Naive thymus-derived CD4-positive, alpha-beta T cell (primary cell): ENCODE measurements at regions of chr4 and their contacts with region 1.

Region 1: DNA sequence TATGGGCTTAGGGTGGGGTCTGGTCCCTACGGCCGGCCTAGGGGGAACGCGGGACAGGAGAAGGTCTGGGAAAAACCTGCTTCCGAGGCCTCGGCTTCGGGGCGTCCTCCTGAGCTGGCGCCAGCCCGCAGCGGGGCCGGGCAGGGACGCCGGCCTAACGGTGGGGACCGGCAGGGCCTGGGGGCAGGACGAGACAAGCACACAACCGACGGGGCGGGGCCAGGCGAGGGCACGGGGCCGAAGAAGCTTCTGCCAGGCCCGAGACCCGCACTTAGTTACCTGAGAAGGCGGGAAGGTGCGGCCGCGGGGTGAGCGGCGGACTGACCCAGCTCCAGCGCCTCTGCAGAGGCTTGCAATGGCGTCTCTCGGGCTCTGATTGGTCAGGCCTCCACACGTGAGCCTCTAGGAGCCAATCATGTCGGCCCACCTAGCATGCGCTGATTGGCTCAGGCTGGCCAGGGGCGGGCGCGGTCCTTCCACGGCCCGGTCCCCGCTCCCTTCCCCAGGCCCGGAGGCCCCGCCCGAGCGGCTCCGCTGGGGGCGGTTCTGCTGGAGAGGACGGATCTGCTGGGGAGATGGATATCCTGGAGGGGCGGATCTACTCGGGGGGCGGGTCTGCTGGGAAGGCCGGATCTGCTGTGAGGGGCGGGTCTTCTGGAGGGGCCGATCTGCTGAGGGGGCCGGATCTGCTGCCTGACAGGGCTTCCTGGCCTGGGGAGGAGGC is 44.3 kb downstream of the CPLX1 start:
- DNase-seq: peak; percentile 96 to 99 (median 98)
- ATAC-seq: peak; percentile 96
- H3K4me3 ChIP-seq: peak overlapping the region; percentile 83
- H3K4me3 Mint-ChIP-seq: peak overlapping the region; percentile 84 to 97 (median 90)
- H3K27ac ChIP-seq: peak overlapping the region; percentile 90
- H3K27ac Mint-ChIP-seq: peak overlapping the region; percentile 81 to 98 (median 95)
- H3K4me1 ChIP-seq: peaks cover 29% of the 10 kb centered on the region in 2 donors
- H3K4me1 Mint-ChIP-seq: peaks cover 42 to 62% (median 47%) of the 10 kb centered on the region in 7 donors
- H3K27me3 ChIP-seq: peaks cover 0 to 6% of the 10 kb centered on the region in 2 donors
- H3K27me3 Mint-ChIP-seq: peaks cover 10 to 22% (median 16%) of the 10 kb centered on the region in 5 donors

Region 2: GRCh38 chr4:498328-498904 is 283.2 kb before region 1 on chr4:
- CTCF ChIA-PET with region 1: no interaction called
- POLR2A ChIA-PET with region 1: no interaction called
- intact Hi-C with region 1: loop called in 1 of 2 experiments (anchors 2 kb)
- DNase-seq: no peak
- ATAC-seq: peak; percentile 60
- H3K4me3 ChIP-seq: peak overlapping the region; percentile 96
- H3K4me3 Mint-ChIP-seq: peak overlapping the region; percentile 90 to 97 (median 94)
- H3K27ac ChIP-seq: peak overlapping the region; percentile 94
- H3K27ac Mint-ChIP-seq: peak overlapping the region; percentile 91 to 98 (median 97)
- H3K4me1 ChIP-seq: peaks cover 13 to 16% of the 10 kb centered on the region in 2 donors
- H3K4me1 Mint-ChIP-seq: peaks cover 19 to 53% (median 44%) of the 10 kb centered on the region in 7 donors
- H3K27me3 ChIP-seq: no peaks in the 10 kb centered on the region
- H3K27me3 Mint-ChIP-seq: no peaks in the 10 kb centered on the region

Region 3: DNA sequence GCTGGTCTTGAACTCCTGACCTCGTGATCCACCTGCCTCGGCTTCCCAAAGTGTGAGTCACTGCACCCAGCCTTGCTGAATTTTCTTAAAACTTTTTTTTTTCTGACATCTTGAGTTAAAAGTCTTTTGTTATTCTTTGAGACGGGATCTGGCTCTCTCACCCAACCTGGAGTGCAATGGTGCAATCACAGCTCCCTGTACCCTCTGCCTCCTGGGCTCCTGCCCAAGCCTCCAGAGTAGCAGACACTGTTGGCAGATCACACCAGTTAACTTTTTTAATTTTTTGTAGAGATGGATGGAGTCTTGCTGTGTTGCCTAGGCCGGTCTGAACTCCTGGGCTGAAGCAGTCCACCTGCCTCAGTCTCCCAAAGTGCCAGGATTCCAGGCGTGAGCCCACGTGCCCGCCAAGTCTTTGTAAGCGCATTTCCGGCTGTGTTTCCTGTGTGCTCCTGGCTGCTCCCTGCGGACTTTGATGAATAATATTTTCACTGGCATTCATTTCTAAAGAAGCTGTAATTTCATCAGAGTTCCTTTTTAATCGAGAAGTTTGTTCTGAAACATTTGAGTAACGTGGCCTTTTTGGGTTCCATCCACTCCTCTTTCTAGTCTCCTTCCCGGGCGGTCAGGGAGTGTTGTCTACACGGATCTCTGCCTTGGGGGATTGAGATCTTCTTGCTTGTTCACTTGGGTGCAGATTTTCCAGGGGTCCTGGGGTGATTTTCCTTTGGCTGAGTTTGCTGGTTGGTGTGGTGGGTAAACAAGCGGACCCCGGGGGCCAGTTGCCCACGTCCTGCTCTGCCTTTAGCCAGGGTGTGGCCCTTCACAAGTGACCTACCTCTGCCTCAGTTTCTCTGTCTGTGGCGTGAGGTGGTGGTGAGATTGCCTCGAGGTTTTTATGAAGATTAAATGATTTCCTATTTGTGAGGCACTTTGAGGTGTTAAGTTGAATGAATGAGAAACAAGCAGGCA is 31.7 kb before region 1 on chr4:
- CTCF ChIA-PET with region 1: no interaction called
- POLR2A ChIA-PET with region 1: no interaction called
- intact Hi-C with region 1: no loop called
- DNase-seq: no peak
- ATAC-seq: no peak
- H3K4me3 ChIP-seq: no peak overlapping the region
- H3K4me3 Mint-ChIP-seq: no peak overlapping the region
- H3K27ac ChIP-seq: no peak overlapping the region
- H3K27ac Mint-ChIP-seq: peak overlapping the region in 3 of 9 donors; percentile 19 to 63 (median 33)
- H3K4me1 ChIP-seq: no peaks in the 10 kb centered on the region
- H3K4me1 Mint-ChIP-seq: peaks cover 0 to 9% (median 5%) of the 10 kb centered on the region in 7 donors
- H3K27me3 ChIP-seq: no peaks in the 10 kb centered on the region
- H3K27me3 Mint-ChIP-seq: no peaks in the 10 kb centered on the region

Region 4: DNA sequence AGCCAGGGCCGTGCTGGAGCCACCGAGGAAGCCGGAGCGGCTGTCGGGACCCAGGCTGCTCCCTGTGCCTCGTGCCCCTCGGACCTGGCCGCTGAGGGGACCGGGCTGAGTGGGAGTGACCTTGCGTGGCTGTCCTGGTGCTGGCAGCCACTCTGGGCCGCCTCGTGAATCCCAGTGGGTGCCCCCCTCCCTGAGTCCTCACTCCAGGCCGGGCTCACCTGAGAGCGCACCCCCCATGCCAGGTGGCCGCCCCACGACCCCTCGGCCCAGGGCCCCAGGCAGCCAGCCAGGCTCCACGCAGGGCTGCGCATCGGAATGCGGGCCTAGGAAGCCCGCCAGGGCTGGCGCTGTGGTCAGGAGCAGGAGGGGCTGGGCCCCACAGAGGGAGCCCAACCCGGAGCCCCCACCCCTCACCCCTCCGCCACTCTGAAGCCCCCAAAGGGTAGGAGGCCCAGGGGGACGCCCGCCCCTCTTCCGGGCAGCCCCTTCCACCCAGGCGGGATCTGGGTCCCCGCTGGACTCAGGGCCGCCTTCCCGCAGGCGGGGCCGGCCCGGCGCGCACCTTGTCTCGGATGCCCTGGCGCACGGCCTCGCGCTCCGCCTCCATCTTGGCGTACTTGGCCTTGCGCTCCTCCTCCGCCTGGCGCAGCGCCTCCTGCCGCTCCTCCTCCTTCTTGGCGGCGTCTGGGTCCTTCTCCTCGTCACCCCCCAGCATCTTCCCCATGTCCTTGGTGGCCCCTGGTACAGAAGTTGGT is 10.4 kb after region 1 on chr4:
- CTCF ChIA-PET with region 1: no interaction called
- POLR2A ChIA-PET with region 1: interaction called, 3 read pairs
- intact Hi-C with region 1: loop called in 1 of 2 experiments (anchors 1 kb)
- DNase-seq: peak in 5 of 9 donors; percentile 21 to 61 (median 46)
- ATAC-seq: peak; percentile 58
- H3K4me3 ChIP-seq: peak overlapping the region; percentile 36
- H3K4me3 Mint-ChIP-seq: peak overlapping the region; percentile 62 to 84 (median 77)
- H3K27ac ChIP-seq: no peak overlapping the region
- H3K27ac Mint-ChIP-seq: peak overlapping the region in 5 of 9 donors; percentile 55 to 87 (median 82)
- H3K4me1 ChIP-seq: peaks cover 6 to 19% of the 10 kb centered on the region in 2 donors
- H3K4me1 Mint-ChIP-seq: peaks cover 18 to 33% (median 25%) of the 10 kb centered on the region in 7 donors
- H3K27me3 ChIP-seq: peaks cover 5 to 18% of the 10 kb centered on the region in 2 donors
- H3K27me3 Mint-ChIP-seq: peaks cover 36 to 50% (median 47%) of the 10 kb centered on the region in 5 donors

Region 5: DNA sequence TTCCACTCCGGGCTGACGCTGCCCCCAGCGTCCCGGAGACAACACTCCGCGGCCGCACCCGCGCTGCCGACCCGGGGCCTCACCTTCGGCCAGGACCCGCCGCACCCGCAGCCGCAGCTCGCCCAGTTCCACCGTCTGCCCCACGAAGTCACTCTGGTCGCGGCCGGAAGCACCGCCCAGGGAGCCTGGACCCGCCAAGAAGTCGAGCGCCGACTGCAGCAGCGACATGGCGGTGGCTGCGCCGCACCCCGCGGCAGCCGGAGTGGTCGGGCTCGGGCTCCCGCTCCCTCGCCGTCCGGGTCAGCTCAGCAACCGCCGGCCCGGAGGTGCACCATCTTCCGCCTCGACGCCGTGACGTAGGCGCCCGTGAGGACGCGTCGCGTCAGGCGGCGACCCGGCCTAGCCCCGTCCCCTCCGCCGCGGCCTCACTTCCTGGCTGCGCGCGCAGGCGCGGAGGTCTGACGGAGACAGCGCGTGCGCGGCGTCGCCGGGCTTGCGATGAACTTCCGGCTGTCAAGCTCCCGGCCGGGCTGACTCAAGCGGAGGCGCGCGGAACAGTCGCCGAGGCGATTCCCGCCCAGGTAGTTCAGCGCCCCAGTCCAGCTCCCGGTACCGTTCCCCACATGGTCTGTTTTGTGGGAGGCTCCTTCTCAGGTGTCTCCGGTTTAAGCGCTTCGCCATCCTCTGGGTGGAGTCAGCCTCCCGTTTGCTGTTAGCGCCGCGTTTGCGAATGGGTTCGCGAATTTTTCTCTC is 150.5 kb after region 1 on chr4 and contains the starts of genes GAK and TMEM175:
- CTCF ChIA-PET with region 1: no interaction called
- POLR2A ChIA-PET with region 1: interaction called, 8 read pairs
- intact Hi-C with region 1: loop called (anchors 1 kb)
- DNase-seq: peak; percentile 93 to 99 (median 98)
- ATAC-seq: peak; percentile 95
- H3K4me3 ChIP-seq: peak within 1 kb of the TSS; percentile 83
- H3K4me3 Mint-ChIP-seq: peak within 1 kb of the TSS; percentile 89 to 99 (median 95)
- H3K27ac ChIP-seq: peak within 1 kb of the TSS; percentile 99
- H3K27ac Mint-ChIP-seq: peak within 1 kb of the TSS; percentile 92 to 97 (median 96)
- H3K4me1 ChIP-seq: peaks cover 24 to 35% of the 10 kb centered on the region in 2 donors
- H3K4me1 Mint-ChIP-seq: peaks cover 35 to 59% (median 48%) of the 10 kb centered on the region in 7 donors
- H3K27me3 ChIP-seq: no peaks in the 10 kb centered on the region
- H3K27me3 Mint-ChIP-seq: no peaks in the 10 kb centered on the region
- total RNA-seq, gene GAK: 167 to 206 (median 174) TPM
- total RNA-seq, gene TMEM175: 28.9 to 69.9 (median 64.9) TPM

Region 6: GRCh38 chr4:1011022-1011694 is 229.5 kb after region 1 on chr4 and contains the start of gene FGFRL1:
- CTCF ChIA-PET with region 1: no interaction called
- POLR2A ChIA-PET with region 1: interaction called, 3 read pairs
- intact Hi-C with region 1: loop called (anchors 1 kb)
- DNase-seq: peak; percentile 78 to 95 (median 87)
- ATAC-seq: peak; percentile 78
- H3K4me3 ChIP-seq: peak within 1 kb of the TSS; percentile 77
- H3K4me3 Mint-ChIP-seq: peak within 1 kb of the TSS; percentile 86 to 97 (median 89)
- H3K27ac ChIP-seq: peak within 1 kb of the TSS; percentile 83
- H3K27ac Mint-ChIP-seq: peak within 1 kb of the TSS; percentile 76 to 96 (median 92)
- H3K4me1 ChIP-seq: peaks cover 0 to 10% of the 10 kb centered on the region in 2 donors
- H3K4me1 Mint-ChIP-seq: peaks cover 15 to 21% (median 18%) of the 10 kb centered on the region in 7 donors
- H3K27me3 ChIP-seq: no peaks in the 10 kb centered on the region
- H3K27me3 Mint-ChIP-seq: peaks cover 24 to 31% (median 27%) of the 10 kb centered on the region in 5 donors
- total RNA-seq, gene FGFRL1: 10.6 to 28.1 (median 22.0) TPM

Region 7: GRCh38 chr4:1712216-1713002 is 930.8 kb after region 1 on chr4 and contains the start of gene SLBP:
- CTCF ChIA-PET with region 1: no interaction called
- POLR2A ChIA-PET with region 1: no interaction called
- intact Hi-C with region 1: no loop called
- DNase-seq: peak; percentile 98 to 99 (median 98)
- ATAC-seq: peak; percentile 92
- H3K4me3 ChIP-seq: peak within 1 kb of the TSS; percentile 100
- H3K4me3 Mint-ChIP-seq: peak within 1 kb of the TSS; percentile 89 to 98 (median 94)
- H3K27ac ChIP-seq: peak within 1 kb of the TSS; percentile 99
- H3K27ac Mint-ChIP-seq: peak within 1 kb of the TSS; percentile 90 to 98 (median 94)
- H3K4me1 ChIP-seq: peaks cover 32 to 34% of the 10 kb centered on the region in 2 donors
- H3K4me1 Mint-ChIP-seq: peaks cover 11 to 67% (median 59%) of the 10 kb centered on the region in 7 donors
- H3K27me3 ChIP-seq: no peaks in the 10 kb centered on the region
- H3K27me3 Mint-ChIP-seq: no peaks in the 10 kb centered on the region
- total RNA-seq, gene SLBP: 29.5 to 103 (median 30.3) TPM

Region 8: DNA sequence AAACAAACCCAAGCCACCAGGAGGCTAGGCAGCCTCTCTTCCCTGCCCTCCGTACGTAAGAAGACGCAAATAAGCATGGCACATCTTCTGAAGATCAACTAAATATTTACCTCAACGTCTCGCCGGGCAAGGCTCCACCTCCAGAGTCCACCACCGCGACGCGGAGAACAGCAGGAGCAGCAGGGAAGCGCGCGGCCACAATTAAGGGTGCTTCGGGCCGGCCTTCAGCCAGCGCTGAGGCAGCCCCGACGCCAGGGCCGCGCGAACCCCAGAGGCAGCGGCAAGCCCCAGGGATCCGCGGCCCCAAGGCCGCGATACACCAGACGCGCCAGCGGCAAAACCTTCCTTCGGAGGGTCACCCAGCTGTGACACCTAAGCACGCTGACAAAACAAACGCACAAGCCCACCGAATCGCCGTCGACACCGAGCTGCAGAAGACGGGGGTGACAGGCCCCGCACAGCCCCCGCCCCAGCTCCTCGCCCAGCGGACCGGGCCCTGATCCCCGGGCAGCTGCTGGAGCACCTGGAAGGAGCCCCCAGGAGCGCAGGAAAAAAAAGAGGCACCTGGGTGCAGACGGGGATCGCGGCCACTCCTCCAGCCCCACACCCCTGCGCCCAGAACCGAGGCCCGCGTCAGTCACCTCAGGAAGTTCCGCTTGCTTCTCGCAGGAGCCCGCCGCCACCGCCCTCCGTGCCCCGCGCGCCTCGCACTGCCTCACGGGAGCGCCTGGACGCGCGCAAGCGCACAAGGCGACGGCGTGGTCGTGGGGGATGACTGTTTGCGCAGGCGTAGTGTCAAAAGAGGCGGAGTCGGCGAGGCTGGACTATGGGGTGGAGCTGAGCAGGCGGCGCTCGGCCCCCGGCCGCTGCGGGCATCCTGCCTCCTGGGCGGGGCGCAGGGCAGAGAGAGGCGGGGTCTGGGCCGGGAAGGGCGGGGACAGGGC is 1460.0 kb after region 1 on chr4 and contains the starts of genes HAUS3 and POLN:
- CTCF ChIA-PET with region 1: no interaction called
- POLR2A ChIA-PET with region 1: no interaction called
- intact Hi-C with region 1: loop called in 1 of 2 experiments (anchors 5 kb)
- DNase-seq: peak; percentile 96 to 100 (median 99)
- ATAC-seq: peak; percentile 97
- H3K4me3 ChIP-seq: peak within 1 kb of the TSS; percentile 93
- H3K4me3 Mint-ChIP-seq: peak within 1 kb of the TSS; percentile 80 to 95 (median 91)
- H3K27ac ChIP-seq: peak within 1 kb of the TSS; percentile 89
- H3K27ac Mint-ChIP-seq: peak within 1 kb of the TSS; percentile 83 to 95 (median 90)
- H3K4me1 ChIP-seq: peaks cover 37 to 38% of the 10 kb centered on the region in 2 donors
- H3K4me1 Mint-ChIP-seq: peaks cover 48 to 65% (median 60%) of the 10 kb centered on the region in 7 donors
- H3K27me3 ChIP-seq: no peaks in the 10 kb centered on the region
- H3K27me3 Mint-ChIP-seq: peaks cover 0 to 6% (median 0%) of the 10 kb centered on the region in 5 donors
- total RNA-seq, gene HAUS3: 24.4 to 88.2 (median 34.1) TPM
- total RNA-seq, gene POLN: 2.4 to 5.4 (median 3.2) TPM